ENCODE measurements at regions of chr10 and their contacts with region 1.

Region 1: GRCh38 chr10:6088721-6089390 is at the start of gene RBM17:
- H3K4me3 Mint-ChIP-seq: peak within 1 kb of the TSS; percentile 93
- H3K27ac Mint-ChIP-seq: peak within 1 kb of the TSS; percentile 90
- H3K4me1 Mint-ChIP-seq: peaks cover 62% of the 10 kb centered on the region
- H3K27me3 Mint-ChIP-seq: no peaks in the 10 kb centered on the region

Region 2: GRCh38 chr10:5948999-5949759 is 139.7 kb before region 1 on chr10:
- intact Hi-C with region 1: loop called (anchors 5 kb)
- H3K4me3 Mint-ChIP-seq: no peak overlapping the region
- H3K27ac Mint-ChIP-seq: no peak overlapping the region
- H3K4me1 Mint-ChIP-seq: peaks cover 51% of the 10 kb centered on the region
- H3K27me3 Mint-ChIP-seq: no peaks in the 10 kb centered on the region

Region 3: DNA sequence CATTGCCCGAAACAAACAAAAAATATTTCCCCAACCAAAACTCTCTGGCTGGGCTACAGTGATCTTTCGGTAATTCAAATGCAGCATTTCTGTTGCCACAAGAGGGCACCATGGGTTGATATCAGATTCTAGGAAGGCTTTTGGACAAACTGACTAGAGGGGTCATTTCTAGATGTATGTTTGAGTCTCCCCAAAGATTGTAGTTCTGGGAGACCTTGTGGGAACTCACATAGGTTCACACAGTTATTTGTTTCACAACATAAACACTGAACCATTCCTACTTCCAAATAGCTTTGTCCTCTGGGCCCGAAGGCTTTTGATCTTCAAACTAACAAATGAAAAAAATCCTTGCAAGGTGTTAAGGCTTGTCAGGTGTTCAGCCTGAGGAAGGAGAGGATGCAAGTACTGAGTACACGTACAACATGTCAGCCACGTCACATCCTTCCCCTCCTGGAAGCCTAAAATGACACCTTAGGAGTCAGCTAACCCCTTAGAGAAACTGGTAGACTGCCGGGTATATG is 74.6 kb before region 1 on chr10:
- intact Hi-C with region 1: loop called (anchors 2 kb)
- H3K4me3 Mint-ChIP-seq: no peak overlapping the region
- H3K27ac Mint-ChIP-seq: no peak overlapping the region
- H3K4me1 Mint-ChIP-seq: peaks cover 12% of the 10 kb centered on the region
- H3K27me3 Mint-ChIP-seq: no peaks in the 10 kb centered on the region

Measured in dendritic cell treated with granulocyte-macrophage colony-stimulating factor and Interleukin-4, amounts not matched to agents 40 ng/mL and 50 ng/mL, for 4 days (primary cell).